ENCODE measurements at regions of chr14 and their contacts with region 1.

Region 1: GRCh38 chr14:74401504-74402241 is 24.3 kb downstream of the SYNDIG1L start:
- DNase-seq: peak; percentile 92
- ATAC-seq: peak; percentile 89
- H3K4me3 ChIP-seq: peak overlapping the region in 4 of 5 experiments; percentile 50 to 67 (median 60)
- H3K4me3 Mint-ChIP-seq: peak overlapping the region; percentile 97
- H3K27ac ChIP-seq: peak overlapping the region; percentile 92 to 94
- H3K27ac Mint-ChIP-seq: peak overlapping the region; percentile 100
- H3K4me1 ChIP-seq: peaks cover 33 to 48% of the 10 kb centered on the region in 2 donors
- H3K4me1 Mint-ChIP-seq: peaks cover 61% of the 10 kb centered on the region
- H3K27me3 ChIP-seq: no peaks in the 10 kb centered on the region
- H3K27me3 Mint-ChIP-seq: no peaks in the 10 kb centered on the region
- CTCF ChIP-seq: no peak

Region 2: GRCh38 chr14:73136387-73137225 is 1265.1 kb before region 1 on chr14 and contains the start of gene PSEN1:
- CTCF ChIA-PET with region 1: no interaction called
- POLR2A ChIA-PET with region 1: no interaction called
- intact Hi-C with region 1: loop called (anchors 5 kb)
- DNase-seq: peak; percentile 99
- ATAC-seq: peak; percentile 94
- H3K4me3 ChIP-seq: peak within 1 kb of the TSS; percentile 65 to 98 (median 90)
- H3K4me3 Mint-ChIP-seq: peak within 1 kb of the TSS; percentile 94
- H3K27ac ChIP-seq: peak within 1 kb of the TSS; percentile 80 to 100
- H3K27ac Mint-ChIP-seq: peak within 1 kb of the TSS; percentile 94
- H3K4me1 ChIP-seq: peaks cover 13 to 16% of the 10 kb centered on the region in 2 donors
- H3K4me1 Mint-ChIP-seq: peaks cover 25% of the 10 kb centered on the region
- H3K27me3 ChIP-seq: no peaks in the 10 kb centered on the region
- H3K27me3 Mint-ChIP-seq: no peaks in the 10 kb centered on the region
- CTCF ChIP-seq: no peak
- total RNA-seq, gene PSEN1: 71.6 and 75.9 TPM in 2 replicates

Region 3: GRCh38 chr14:74302634-74303577 is 98.8 kb before region 1 on chr14 and contains the start of gene ABCD4:
- CTCF ChIA-PET with region 1: interaction called, 3 read pairs
- POLR2A ChIA-PET with region 1: interaction called, 3 read pairs
- intact Hi-C with region 1: loop called (anchors 1 kb)
- DNase-seq: peak; percentile 90
- ATAC-seq: peak; percentile 98
- H3K4me3 ChIP-seq: peak within 1 kb of the TSS; percentile 69 to 96 (median 86)
- H3K4me3 Mint-ChIP-seq: peak within 1 kb of the TSS; percentile 95
- H3K27ac ChIP-seq: peak within 1 kb of the TSS; percentile 69 to 81
- H3K27ac Mint-ChIP-seq: peak within 1 kb of the TSS; percentile 88
- H3K4me1 ChIP-seq: peaks cover 11 to 14% of the 10 kb centered on the region in 2 donors
- H3K4me1 Mint-ChIP-seq: peaks cover 23% of the 10 kb centered on the region
- H3K27me3 ChIP-seq: no peaks in the 10 kb centered on the region
- H3K27me3 Mint-ChIP-seq: no peaks in the 10 kb centered on the region
- CTCF ChIP-seq: peak; percentile 59
- total RNA-seq, gene ABCD4: 119 and 125 TPM in 2 replicates

Region 4: GRCh38 chr14:74421981-74422380 is 20.3 kb after region 1 on chr14:
- CTCF ChIA-PET with region 1: no interaction called
- POLR2A ChIA-PET with region 1: no interaction called
- intact Hi-C with region 1: loop called (anchors 2 kb)
- DNase-seq: no peak
- ATAC-seq: no peak
- H3K4me3 ChIP-seq: no peak overlapping the region
- H3K4me3 Mint-ChIP-seq: no peak overlapping the region
- H3K27ac ChIP-seq: no peak overlapping the region
- H3K27ac Mint-ChIP-seq: no peak overlapping the region
- H3K4me1 ChIP-seq: peaks cover 0 to 3% of the 10 kb centered on the region in 2 donors
- H3K4me1 Mint-ChIP-seq: peaks cover 2% of the 10 kb centered on the region
- H3K27me3 ChIP-seq: peaks cover 0 to 35% (median 19%) of the 10 kb centered on the region in 4 experiments
- H3K27me3 Mint-ChIP-seq: peaks cover 38% of the 10 kb centered on the region
- CTCF ChIP-seq: no peak

Region 5: DNA sequence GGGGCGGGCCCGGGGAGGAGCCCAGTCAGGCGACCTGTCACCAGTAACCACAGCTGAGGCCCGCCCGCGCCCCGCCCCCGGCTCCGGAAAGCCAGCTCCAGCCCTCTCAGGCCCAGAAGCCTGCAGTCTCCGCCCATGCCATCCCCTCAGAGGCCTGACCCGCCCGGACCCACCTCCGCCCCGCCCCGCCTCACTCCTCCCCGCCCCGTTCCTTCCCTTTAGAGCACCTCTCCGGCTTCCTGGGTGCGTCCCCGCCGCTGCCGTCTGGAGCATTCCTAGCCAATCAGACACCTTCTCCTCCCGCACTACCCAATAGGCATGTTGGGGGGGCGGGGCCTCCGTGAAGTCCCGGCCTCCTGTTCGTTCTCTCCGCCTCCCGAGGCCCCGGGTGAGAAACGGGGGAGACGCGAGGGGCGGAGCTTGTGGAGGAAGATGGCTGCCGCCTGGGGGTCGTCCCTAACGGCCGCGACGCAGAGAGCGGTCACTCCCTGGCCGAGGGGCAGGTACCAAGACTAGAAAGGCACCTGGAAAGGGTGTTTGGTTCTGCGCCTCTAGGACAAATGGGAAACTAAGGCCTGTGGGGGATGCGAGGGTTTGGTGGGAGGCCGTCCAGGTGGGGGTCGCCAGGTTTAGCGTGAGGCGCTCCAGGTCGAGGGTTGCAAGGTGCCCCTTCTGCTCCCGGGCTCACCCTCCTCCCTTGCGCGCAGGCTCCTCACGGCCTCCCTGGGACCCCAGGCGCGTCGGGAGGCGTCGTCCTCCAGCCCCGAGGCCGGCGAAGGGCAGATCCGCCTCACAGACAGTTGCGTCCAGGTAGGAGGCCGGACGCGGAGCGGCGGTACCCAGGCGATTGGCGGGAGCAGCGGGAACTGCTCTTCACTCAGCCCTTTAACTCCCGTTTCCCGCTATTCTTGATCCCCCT is 91.9 kb after region 1 on chr14 and contains the start of gene ISCA2:
- CTCF ChIA-PET with region 1: interaction called, 7 read pairs
- POLR2A ChIA-PET with region 1: interaction called, 13 read pairs
- intact Hi-C with region 1: loop called (anchors 1 kb)
- DNase-seq: peak; percentile 99
- ATAC-seq: peak; percentile 89
- H3K4me3 ChIP-seq: peak within 1 kb of the TSS; percentile 87 to 98 (median 94)
- H3K4me3 Mint-ChIP-seq: no peak within 1 kb of the TSS
- H3K27ac ChIP-seq: peak within 1 kb of the TSS; percentile 74 to 97
- H3K27ac Mint-ChIP-seq: peak within 1 kb of the TSS; percentile 83
- H3K4me1 ChIP-seq: peaks cover 18 to 27% of the 10 kb centered on the region in 2 donors
- H3K4me1 Mint-ChIP-seq: peaks cover 33% of the 10 kb centered on the region
- H3K27me3 ChIP-seq: no peaks in the 10 kb centered on the region
- H3K27me3 Mint-ChIP-seq: no peaks in the 10 kb centered on the region
- CTCF ChIP-seq: no peak
- total RNA-seq, gene ISCA2: 28.3 and 30.0 TPM in 2 replicates